ENCODE measurements at regions of chr12 and their contacts with region 1.

Region 1: DNA sequence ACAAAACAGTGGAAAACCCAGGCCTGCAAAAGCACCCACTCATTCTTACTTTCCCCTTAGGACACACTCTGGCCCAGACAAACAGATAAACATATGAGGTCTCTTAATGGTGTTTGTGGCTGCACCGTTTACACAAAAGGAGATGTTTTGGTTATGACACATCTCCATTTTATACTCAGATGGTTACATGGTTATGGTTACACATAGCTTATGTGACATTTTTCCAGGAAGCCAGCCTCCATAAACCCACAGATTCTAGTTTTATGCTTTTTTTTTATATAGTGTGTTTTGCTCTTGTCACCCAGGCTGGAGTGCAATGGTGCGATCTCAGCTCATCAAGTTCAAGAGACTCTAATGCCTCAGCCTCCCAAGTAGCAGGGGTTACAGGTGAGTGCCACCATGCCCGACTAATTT is 3.5 kb upstream of the KLRD1 start:
- DNase-seq: peak; percentile 37 to 67
- ATAC-seq: peak; percentile 50 to 77 (median 69)
- H3K4me3 ChIP-seq: peak overlapping the region; percentile 87
- H3K4me3 Mint-ChIP-seq: peak overlapping the region; percentile 95
- H3K27ac ChIP-seq: peak overlapping the region; percentile 84
- H3K27ac Mint-ChIP-seq: peak overlapping the region; percentile 97 to 100
- H3K4me1 ChIP-seq: peaks cover 30% of the 10 kb centered on the region
- H3K4me1 Mint-ChIP-seq: peaks cover 86 to 96% of the 10 kb centered on the region in 2 donors
- H3K27me3 ChIP-seq: no peaks in the 10 kb centered on the region
- H3K27me3 Mint-ChIP-seq: no peaks in the 10 kb centered on the region
- CTCF ChIP-seq: no peak

Region 2: GRCh38 chr12:10212201-10213131 is 91.7 kb before region 1 on chr12 and contains the start of gene GABARAPL1:
- intact Hi-C with region 1: loop called (anchors 1 kb)
- DNase-seq: peak; percentile 88 to 92
- ATAC-seq: peak; percentile 68 to 85 (median 72)
- H3K4me3 ChIP-seq: peak within 1 kb of the TSS; percentile 97
- H3K4me3 Mint-ChIP-seq: peak within 1 kb of the TSS; percentile 95
- H3K27ac ChIP-seq: peak within 1 kb of the TSS; percentile 99
- H3K27ac Mint-ChIP-seq: peak within 1 kb of the TSS; percentile 91 to 97
- H3K4me1 ChIP-seq: peaks cover 38% of the 10 kb centered on the region
- H3K4me1 Mint-ChIP-seq: peaks cover 32 to 34% of the 10 kb centered on the region in 2 donors
- H3K27me3 ChIP-seq: no peaks in the 10 kb centered on the region
- H3K27me3 Mint-ChIP-seq: no peaks in the 10 kb centered on the region
- CTCF ChIP-seq: no peak
- total RNA-seq, gene GABARAPL1: 157 to 233 (median 160) TPM

Region 3: GRCh38 chr12:10293570-10294227 is 10.5 kb before region 1 on chr12:
- intact Hi-C with region 1: loop called (anchors 1 kb)
- DNase-seq: peak in 1 of 2 donors; percentile 79
- ATAC-seq: peak; percentile 54 to 74 (median 71)
- H3K4me3 ChIP-seq: no peak overlapping the region
- H3K4me3 Mint-ChIP-seq: peak overlapping the region; percentile 60
- H3K27ac ChIP-seq: peak overlapping the region; percentile 67
- H3K27ac Mint-ChIP-seq: peak overlapping the region; percentile 88 to 90
- H3K4me1 ChIP-seq: peaks cover 41% of the 10 kb centered on the region
- H3K4me1 Mint-ChIP-seq: peaks cover 71 to 79% of the 10 kb centered on the region in 2 donors
- H3K27me3 ChIP-seq: no peaks in the 10 kb centered on the region
- H3K27me3 Mint-ChIP-seq: no peaks in the 10 kb centered on the region
- CTCF ChIP-seq: no peak

Region 4: DNA sequence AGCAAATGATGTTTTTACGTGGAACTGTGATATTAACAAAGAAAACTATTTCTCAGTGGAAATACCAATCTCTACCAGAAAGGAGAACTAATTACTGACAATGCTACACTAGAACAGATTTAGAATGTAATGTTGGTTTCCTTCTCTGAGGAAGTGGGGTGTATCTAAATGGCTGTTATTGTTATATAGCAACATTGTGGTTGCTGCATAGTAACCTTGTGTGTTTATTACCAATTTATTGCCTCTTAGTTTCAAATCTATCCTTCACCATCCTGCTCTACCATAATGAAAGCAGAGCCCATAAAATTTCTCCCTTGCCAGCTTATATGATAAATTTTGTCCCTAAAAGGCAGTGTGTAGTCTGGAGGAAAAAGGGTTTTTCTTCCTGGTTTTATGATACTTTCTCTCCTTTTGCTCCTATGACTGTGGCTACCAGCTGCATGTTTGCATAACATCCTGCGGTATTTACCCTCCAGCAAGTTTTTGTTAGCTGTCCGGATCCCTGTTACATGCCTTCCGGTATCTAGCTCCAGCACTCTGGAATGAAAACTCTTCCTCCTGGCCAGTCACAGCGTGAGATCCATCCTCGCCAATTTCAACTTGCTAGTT is 91.3 kb after region 1 on chr12:
- intact Hi-C with region 1: loop called (anchors 2 kb)
- DNase-seq: peak in 1 of 2 donors; percentile 75
- ATAC-seq: peak; percentile 52 to 82 (median 75)
- H3K4me3 ChIP-seq: peak overlapping the region; percentile 5
- H3K4me3 Mint-ChIP-seq: peak overlapping the region; percentile 87
- H3K27ac ChIP-seq: peak overlapping the region; percentile 92
- H3K27ac Mint-ChIP-seq: peak overlapping the region; percentile 97 to 98
- H3K4me1 ChIP-seq: peaks cover 42% of the 10 kb centered on the region
- H3K4me1 Mint-ChIP-seq: peaks cover 63 to 68% of the 10 kb centered on the region in 2 donors
- H3K27me3 ChIP-seq: no peaks in the 10 kb centered on the region
- H3K27me3 Mint-ChIP-seq: no peaks in the 10 kb centered on the region
- CTCF ChIP-seq: no peak

Region 5: DNA sequence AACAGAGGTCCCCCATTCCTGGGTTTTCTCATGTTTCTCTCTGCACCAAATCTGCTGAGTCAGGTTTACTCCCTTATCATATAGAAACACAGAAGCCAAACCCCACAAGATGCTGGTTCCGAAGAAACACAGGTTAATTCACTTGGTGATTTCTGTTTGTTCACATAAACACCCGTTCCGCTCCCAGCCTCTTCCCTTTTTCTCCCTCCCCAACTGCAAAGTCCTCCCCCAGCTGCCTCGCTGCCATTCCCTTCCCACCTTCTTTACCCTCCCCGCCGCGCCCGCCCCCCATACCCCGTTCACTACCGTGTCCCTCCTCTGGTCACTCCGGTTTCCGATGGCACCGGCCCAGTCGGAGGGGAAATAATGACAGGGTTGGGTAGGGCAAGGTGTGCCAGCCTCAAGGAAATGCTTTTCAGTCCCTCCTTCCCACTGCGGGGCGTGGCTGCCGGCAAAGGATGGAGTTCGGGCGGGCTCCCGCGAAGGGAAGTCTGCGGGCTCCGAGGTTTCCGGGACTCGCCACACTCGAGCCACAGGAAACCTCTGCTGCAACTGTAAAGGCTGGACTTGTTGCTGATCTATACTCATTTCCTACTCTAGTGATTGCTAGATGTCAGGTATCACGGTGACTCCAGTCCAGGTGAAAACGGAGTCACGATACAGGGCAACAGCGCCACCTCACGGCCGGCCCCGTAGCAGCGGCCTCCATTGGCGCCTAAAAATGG is 369.7 kb after region 1 on chr12 and contains the start of gene STYK1:
- intact Hi-C with region 1: loop called (anchors 5 kb)
- DNase-seq: peak; percentile 65 to 86
- ATAC-seq: peak; percentile 59 to 80 (median 76)
- H3K4me3 ChIP-seq: peak within 1 kb of the TSS; percentile 34
- H3K4me3 Mint-ChIP-seq: peak within 1 kb of the TSS; percentile 80
- H3K27ac ChIP-seq: peak within 1 kb of the TSS; percentile 40
- H3K27ac Mint-ChIP-seq: peak within 1 kb of the TSS; percentile 64 to 74
- H3K4me1 ChIP-seq: peaks cover 30% of the 10 kb centered on the region
- H3K4me1 Mint-ChIP-seq: peaks cover 42 to 48% of the 10 kb centered on the region in 2 donors
- H3K27me3 ChIP-seq: peaks cover 20% of the 10 kb centered on the region
- H3K27me3 Mint-ChIP-seq: peaks cover 22 to 40% of the 10 kb centered on the region in 2 donors
- CTCF ChIP-seq: peak; percentile 94
- total RNA-seq, gene STYK1: 2.0 to 2.6 (median 2.4) TPM

Measured in natural killer cell (primary cell).